Naive thymus-derived CD4-positive, alpha-beta T cell (primary cell): ENCODE measurements at regions of chr6 and their contacts with region 1.

Region 1: DNA sequence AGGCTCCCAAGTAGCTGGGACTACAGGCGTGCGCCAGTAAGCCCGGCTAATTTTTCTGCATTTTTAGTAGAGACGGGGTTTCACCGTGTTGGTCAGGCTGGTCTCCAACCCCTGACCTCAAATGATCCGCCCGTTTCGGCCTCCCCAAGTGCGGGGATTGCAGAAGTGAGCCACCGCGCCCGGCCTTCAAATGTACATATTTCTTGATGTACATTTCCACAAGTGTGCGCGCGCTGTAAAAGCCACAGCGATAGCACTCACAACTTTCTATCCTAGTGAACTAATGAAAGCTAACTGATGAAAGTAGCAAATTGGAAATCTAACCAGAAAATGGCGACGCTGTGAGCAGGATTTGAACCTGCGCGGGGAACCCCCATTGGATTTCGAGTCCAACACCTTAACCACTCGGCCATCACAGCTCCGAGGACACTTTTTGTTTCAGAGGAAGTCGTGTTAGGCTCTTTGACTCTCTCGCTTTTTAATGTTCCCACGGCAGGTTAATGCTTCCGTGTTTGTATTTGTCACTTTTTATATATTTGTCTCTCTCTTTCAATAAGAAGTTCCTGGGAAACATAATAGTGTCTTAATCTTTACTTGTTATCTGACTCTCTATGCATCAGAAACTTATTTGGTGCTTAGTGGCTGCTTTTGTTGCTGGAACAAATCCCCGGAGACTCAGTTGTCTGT is 199.4 kb upstream of the ZNF184 start:
- DNase-seq: no peak
- ATAC-seq: no peak
- H3K4me3 ChIP-seq: no peak overlapping the region
- H3K4me3 Mint-ChIP-seq: peak overlapping the region in 8 of 10 donors; percentile 0 to 55 (median 18)
- H3K27ac ChIP-seq: no peak overlapping the region
- H3K27ac Mint-ChIP-seq: peak overlapping the region in 6 of 9 donors; percentile 14 to 70 (median 36)
- H3K4me1 ChIP-seq: peaks cover 0 to 8% of the 10 kb centered on the region in 2 donors
- H3K4me1 Mint-ChIP-seq: peaks cover 10 to 45% (median 32%) of the 10 kb centered on the region in 7 donors
- H3K27me3 ChIP-seq: peaks cover 29 to 54% of the 10 kb centered on the region in 2 donors
- H3K27me3 Mint-ChIP-seq: peaks cover 76 to 95% (median 89%) of the 10 kb centered on the region in 5 donors

Region 2: GRCh38 chr6:26754212-26754611 is 918.0 kb before region 1 on chr6:
- CTCF ChIA-PET with region 1: no interaction called
- POLR2A ChIA-PET with region 1: no interaction called
- intact Hi-C with region 1: no loop called
- DNase-seq: no peak
- ATAC-seq: no peak
- H3K4me3 ChIP-seq: no peak overlapping the region
- H3K4me3 Mint-ChIP-seq: peak overlapping the region in 2 of 10 donors; percentile 30 to 67
- H3K27ac ChIP-seq: no peak overlapping the region
- H3K27ac Mint-ChIP-seq: peak overlapping the region in 5 of 9 donors; percentile 49 to 73 (median 62)
- H3K4me1 ChIP-seq: no peaks in the 10 kb centered on the region
- H3K4me1 Mint-ChIP-seq: peaks cover 0 to 3% (median 0%) of the 10 kb centered on the region in 7 donors
- H3K27me3 ChIP-seq: peaks cover 0 to 10% of the 10 kb centered on the region in 2 donors
- H3K27me3 Mint-ChIP-seq: peaks cover 0 to 56% (median 50%) of the 10 kb centered on the region in 5 donors

Region 3: DNA sequence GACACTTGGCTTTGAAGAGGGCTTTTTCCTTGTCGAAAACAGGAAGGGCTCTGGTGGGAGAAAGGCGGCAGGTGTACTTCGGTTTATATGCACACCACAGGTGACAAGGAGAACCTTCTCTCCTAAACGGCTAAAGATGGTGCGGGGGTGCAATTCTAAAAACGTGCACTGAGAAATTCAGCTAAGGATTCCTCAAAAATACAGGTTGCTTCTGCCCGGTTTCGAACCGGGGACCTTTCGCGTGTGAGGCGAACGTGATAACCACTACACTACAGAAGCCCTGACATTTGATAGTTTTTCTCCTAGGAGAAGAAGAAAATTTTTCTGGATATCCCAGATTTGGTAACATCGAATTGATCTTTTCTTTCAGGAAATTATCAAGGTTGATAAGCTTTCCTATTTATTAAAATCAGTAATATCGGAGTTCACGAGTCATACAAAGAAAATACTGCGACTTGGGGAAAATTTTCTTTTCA is 392.2 kb before region 1 on chr6:
- CTCF ChIA-PET with region 1: no interaction called
- POLR2A ChIA-PET with region 1: no interaction called
- intact Hi-C with region 1: loop called in 1 of 2 experiments (anchors 5 kb)
- DNase-seq: peak in 1 of 9 donors; percentile 13
- ATAC-seq: no peak
- H3K4me3 ChIP-seq: no peak overlapping the region
- H3K4me3 Mint-ChIP-seq: peak overlapping the region in 5 of 10 donors; percentile 28 to 51 (median 44)
- H3K27ac ChIP-seq: no peak overlapping the region
- H3K27ac Mint-ChIP-seq: peak overlapping the region in 5 of 9 donors; percentile 59 to 83 (median 77)
- H3K4me1 ChIP-seq: no peaks in the 10 kb centered on the region
- H3K4me1 Mint-ChIP-seq: peaks cover 0 to 19% (median 4%) of the 10 kb centered on the region in 7 donors
- H3K27me3 ChIP-seq: peaks cover 32 to 52% of the 10 kb centered on the region in 2 donors
- H3K27me3 Mint-ChIP-seq: peaks cover 74 to 88% (median 86%) of the 10 kb centered on the region in 5 donors

Region 4: GRCh38 chr6:27547157-27548075 is 124.8 kb before region 1 on chr6:
- CTCF ChIA-PET with region 1: no interaction called
- POLR2A ChIA-PET with region 1: no interaction called
- intact Hi-C with region 1: loop called in 1 of 2 experiments (anchors 5 kb)
- DNase-seq: no peak
- ATAC-seq: no peak
- H3K4me3 ChIP-seq: no peak overlapping the region
- H3K4me3 Mint-ChIP-seq: peak overlapping the region in 1 of 10 donors; percentile 17
- H3K27ac ChIP-seq: no peak overlapping the region
- H3K27ac Mint-ChIP-seq: peak overlapping the region in 2 of 9 donors; percentile 4 to 51
- H3K4me1 ChIP-seq: peaks cover 0 to 5% of the 10 kb centered on the region in 2 donors
- H3K4me1 Mint-ChIP-seq: peaks cover 0 to 28% (median 14%) of the 10 kb centered on the region in 7 donors
- H3K27me3 ChIP-seq: peaks cover 21 to 49% of the 10 kb centered on the region in 2 donors
- H3K27me3 Mint-ChIP-seq: peaks cover 85 to 93% (median 91%) of the 10 kb centered on the region in 5 donors

Region 5: DNA sequence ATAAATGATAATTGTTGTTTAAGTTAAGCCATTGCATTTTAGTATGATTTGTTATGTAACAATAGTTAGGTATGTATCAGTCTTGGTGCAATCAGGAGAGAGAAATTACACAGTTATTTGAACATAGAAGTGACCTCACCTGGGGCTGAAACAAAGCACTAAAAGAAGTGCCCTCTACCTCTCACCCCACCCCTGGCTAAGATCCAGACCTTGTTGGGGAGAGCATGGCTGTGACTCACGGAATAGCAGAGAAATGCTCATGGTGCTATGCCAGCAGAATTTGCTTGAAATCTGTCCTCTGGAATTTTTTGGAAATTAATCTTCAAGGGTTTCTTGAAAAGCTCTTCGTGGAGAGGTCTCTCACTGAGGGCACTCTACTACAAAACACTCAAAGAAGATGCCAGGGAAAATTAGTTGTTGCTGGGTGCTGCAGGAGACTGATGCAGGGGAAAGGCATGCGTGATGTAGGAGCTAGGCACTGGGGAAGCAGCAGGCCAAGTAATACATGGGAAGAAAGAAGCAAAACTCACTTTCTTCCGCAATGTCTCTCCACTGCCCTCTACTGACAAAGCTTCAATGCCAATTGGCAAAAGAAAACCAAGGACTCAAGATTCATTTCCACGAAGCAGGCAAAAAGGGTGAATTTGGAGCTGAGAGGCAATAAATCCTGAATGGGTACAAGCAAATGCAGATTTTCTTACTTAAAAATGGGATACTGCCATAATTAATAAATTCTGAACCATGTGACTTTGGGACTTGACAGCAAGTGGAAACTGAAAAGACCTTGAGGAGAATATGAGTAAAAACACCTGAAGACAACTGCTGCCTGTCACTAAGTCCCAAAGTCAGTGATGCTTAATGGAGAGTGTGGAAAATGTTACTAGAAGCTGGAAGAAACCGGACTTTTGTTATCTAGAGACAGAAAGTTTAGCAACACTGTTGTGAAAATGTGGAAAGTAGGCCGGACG is 63.1 kb before region 1 on chr6:
- CTCF ChIA-PET with region 1: no interaction called
- POLR2A ChIA-PET with region 1: no interaction called
- intact Hi-C with region 1: loop called in 1 of 2 experiments (anchors 2 kb)
- DNase-seq: peak in 2 of 9 donors; percentile 19 to 33
- ATAC-seq: no peak
- H3K4me3 ChIP-seq: no peak overlapping the region
- H3K4me3 Mint-ChIP-seq: no peak overlapping the region
- H3K27ac ChIP-seq: no peak overlapping the region
- H3K27ac Mint-ChIP-seq: no peak overlapping the region
- H3K4me1 ChIP-seq: no peaks in the 10 kb centered on the region
- H3K4me1 Mint-ChIP-seq: peaks cover 0 to 17% (median 9%) of the 10 kb centered on the region in 7 donors
- H3K27me3 ChIP-seq: peaks cover 7 to 11% of the 10 kb centered on the region in 2 donors
- H3K27me3 Mint-ChIP-seq: peaks cover 44 to 73% (median 60%) of the 10 kb centered on the region in 5 donors

Region 6: DNA sequence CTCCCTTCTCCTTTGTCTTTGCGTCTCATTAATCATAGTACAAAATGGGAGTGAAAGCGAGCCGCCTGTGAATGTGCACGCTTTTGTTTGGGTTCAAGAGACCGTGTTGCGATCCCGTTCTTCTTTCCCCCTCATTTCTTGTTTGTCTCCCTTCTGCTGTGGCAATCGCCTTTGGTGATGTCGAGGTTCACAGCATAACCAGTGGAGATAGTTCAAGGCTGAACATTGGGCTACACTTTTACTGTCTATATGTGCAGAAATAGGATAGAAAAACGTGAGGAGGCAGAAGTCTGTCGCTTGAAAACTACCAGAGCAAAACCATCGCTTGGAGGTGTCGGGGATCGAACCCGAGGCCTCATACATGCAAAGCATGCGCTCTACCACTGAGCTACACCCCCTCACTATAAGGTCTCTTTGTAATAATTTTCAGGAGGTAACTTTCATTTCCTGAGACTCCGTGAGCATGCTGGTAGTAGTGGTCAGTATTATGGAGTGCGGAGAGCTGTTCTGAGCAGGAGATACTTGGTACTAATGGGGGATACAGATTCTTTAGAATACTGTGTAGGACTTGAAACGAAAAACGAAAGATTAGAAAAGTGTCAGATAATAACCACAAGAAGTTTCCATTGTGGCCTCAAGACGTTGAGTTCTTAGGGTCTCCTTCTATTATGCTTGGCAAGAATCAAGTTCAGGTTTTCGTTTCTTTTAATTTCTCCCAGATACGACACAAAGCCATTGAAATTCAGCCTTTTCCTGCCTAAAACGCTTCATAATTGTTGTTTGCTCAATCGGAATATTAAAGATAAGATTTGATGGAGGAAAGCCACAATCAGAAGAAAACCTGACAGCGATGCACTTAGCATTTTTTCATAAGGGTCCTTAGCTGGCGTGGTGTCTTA is 1144.9 kb after region 1 on chr6:
- CTCF ChIA-PET with region 1: no interaction called
- POLR2A ChIA-PET with region 1: no interaction called
- intact Hi-C with region 1: loop called in 1 of 2 experiments (anchors 10 kb)
- DNase-seq: no peak
- ATAC-seq: no peak
- H3K4me3 ChIP-seq: no peak overlapping the region
- H3K4me3 Mint-ChIP-seq: peak overlapping the region in 2 of 10 donors; percentile 7 to 8
- H3K27ac ChIP-seq: no peak overlapping the region
- H3K27ac Mint-ChIP-seq: peak overlapping the region in 2 of 9 donors; percentile 44 to 49
- H3K4me1 ChIP-seq: no peaks in the 10 kb centered on the region
- H3K4me1 Mint-ChIP-seq: peaks cover 2 to 21% (median 9%) of the 10 kb centered on the region in 7 donors
- H3K27me3 ChIP-seq: peaks cover 23 to 45% of the 10 kb centered on the region in 2 donors
- H3K27me3 Mint-ChIP-seq: peaks cover 75 to 91% (median 88%) of the 10 kb centered on the region in 5 donors